CD14-positive monocyte (primary cell): ENCODE measurements at regions of chr5 and their contacts with region 1.

Region 1: GRCh38 chr5:10607666-10608073 is 43.8 kb downstream of the ANKRD33B start:
- DNase-seq: peak; percentile 81 to 88 (median 87)
- H3K4me3 ChIP-seq: peak overlapping the region in 2 of 3 experiments; percentile 26 to 53
- H3K4me3 Mint-ChIP-seq: peak overlapping the region; percentile 69 to 82
- H3K27ac ChIP-seq: peak overlapping the region; percentile 41 to 75
- H3K27ac Mint-ChIP-seq: peak overlapping the region; percentile 82 to 94 (median 90)
- H3K4me1 ChIP-seq: peaks cover 21 to 27% of the 10 kb centered on the region in 2 donors
- H3K4me1 Mint-ChIP-seq: peaks cover 31% of the 10 kb centered on the region
- H3K27me3 ChIP-seq: no peaks in the 10 kb centered on the region
- H3K27me3 Mint-ChIP-seq: peaks cover 1 to 2% (median 2%) of the 10 kb centered on the region in 3 donors
- CTCF ChIP-seq: peak; percentile 43

Region 2: GRCh38 chr5:10563945-10564837 is 43.5 kb before region 1 on chr5 and contains the start of gene ANKRD33B:
- intact Hi-C with region 1: loop called in 1 of 2 experiments (anchors 5 kb)
- DNase-seq: peak; percentile 33 to 69 (median 46)
- H3K4me3 ChIP-seq: peak within 1 kb of the TSS; percentile 26 to 75 (median 46)
- H3K4me3 Mint-ChIP-seq: peak within 1 kb of the TSS; percentile 91 to 96
- H3K27ac ChIP-seq: no peak within 1 kb of the TSS
- H3K27ac Mint-ChIP-seq: peak within 1 kb of the TSS in 5 of 7 donors; percentile 2 to 61 (median 42)
- H3K4me1 ChIP-seq: peaks cover 31 to 39% of the 10 kb centered on the region in 2 donors
- H3K4me1 Mint-ChIP-seq: peaks cover 45% of the 10 kb centered on the region
- H3K27me3 ChIP-seq: peaks cover 4 to 29% of the 10 kb centered on the region in 2 donors
- H3K27me3 Mint-ChIP-seq: peaks cover 30 to 46% (median 38%) of the 10 kb centered on the region in 3 donors
- CTCF ChIP-seq: no peak
- polyA plus RNA-seq, gene ANKRD33B: 0.05 TPM in 1 of 3 donors, not detected in the others

Region 3: DNA sequence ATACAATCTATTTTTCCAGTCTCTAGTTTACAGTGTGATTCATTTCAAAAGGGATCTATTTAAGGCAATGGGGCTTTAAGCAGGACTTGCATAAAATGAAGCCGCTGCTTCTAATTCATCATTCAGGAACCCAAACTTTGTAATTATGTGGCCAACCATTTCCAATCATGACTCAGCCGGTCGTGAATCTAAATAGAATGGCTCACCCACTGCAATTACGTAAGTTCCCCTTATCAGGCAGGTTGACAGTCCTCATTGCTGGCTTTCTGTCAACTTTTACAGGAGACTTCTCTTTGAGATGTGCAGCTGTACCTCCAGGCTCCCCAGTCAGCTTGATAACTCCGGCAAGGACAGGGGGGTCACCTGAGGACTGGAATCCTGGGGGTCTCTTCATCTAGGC is 306.2 kb after region 1 on chr5:
- intact Hi-C with region 1: no loop called
- DNase-seq: peak; percentile 73 to 87 (median 78)
- H3K4me3 ChIP-seq: no peak overlapping the region
- H3K4me3 Mint-ChIP-seq: no peak overlapping the region
- H3K27ac ChIP-seq: no peak overlapping the region
- H3K27ac Mint-ChIP-seq: no peak overlapping the region
- H3K4me1 ChIP-seq: peaks cover 10% of the 10 kb centered on the region in 2 donors
- H3K4me1 Mint-ChIP-seq: peaks cover 17% of the 10 kb centered on the region
- H3K27me3 ChIP-seq: peaks cover 0 to 3% of the 10 kb centered on the region in 2 donors
- H3K27me3 Mint-ChIP-seq: peaks cover 1 to 12% (median 8%) of the 10 kb centered on the region in 3 donors
- CTCF ChIP-seq: no peak